ENCODE measurements at regions of chr16 and their contacts with region 1.

Region 1: GRCh38 chr16:29700253-29700987 is 21.4 kb downstream of the QPRT start:
- DNase-seq: peak; percentile 87
- H3K4me3 Mint-ChIP-seq: no peak overlapping the region
- H3K27ac Mint-ChIP-seq: no peak overlapping the region
- H3K4me1 Mint-ChIP-seq: no peaks in the 10 kb centered on the region
- H3K27me3 Mint-ChIP-seq: peaks cover 22% of the 10 kb centered on the region
- CTCF ChIP-seq: peak; percentile 95

Region 2: DNA sequence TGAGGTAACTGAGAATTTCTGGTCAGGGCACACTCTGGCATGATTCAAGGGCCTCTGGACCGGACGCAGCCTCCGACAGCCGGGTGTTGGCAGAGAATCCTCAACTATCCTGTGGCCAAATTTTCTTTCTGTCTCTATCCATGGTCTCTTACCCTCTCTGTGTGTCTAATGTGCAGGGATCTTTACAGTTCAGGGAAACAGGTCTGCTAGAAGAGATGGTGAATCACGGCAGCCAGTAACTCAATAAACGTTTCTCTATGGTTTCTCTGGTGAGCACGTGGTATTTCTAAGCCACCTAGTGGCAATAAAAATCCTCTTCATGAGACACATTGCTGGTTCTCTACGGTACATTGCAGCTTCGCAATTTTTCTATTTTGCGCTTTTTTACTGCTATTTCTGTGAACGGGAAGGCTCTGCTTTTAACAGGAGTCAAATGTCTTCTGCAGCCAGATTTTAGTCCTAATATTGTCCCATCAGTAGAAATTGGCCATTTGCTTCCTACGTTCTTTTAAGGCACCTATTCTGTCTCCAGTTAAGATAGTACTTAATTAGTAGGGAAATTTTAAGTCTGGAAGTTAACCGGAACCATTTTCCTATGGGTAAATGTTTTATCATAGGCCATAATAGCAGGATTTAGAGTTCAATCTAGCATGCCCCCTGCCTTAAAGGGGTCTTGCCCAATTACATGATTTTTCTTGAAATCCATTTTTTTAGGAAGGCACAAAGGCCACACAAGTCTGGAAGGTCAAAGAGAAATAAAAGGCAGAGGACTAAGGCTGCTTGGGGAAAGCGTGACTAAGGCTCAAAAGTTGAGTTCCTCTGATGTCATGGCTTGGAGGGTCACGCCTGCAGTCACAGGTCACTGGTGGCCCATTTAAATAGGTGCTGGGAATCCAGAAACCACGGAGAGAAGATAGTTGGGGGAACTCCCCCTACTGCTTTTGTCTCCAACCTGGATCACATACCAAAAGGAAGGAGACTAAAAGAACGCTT is 10.1 kb after region 1 on chr16:
- CTCF ChIA-PET with region 1: interaction called, 19 read pairs
- POLR2A ChIA-PET with region 1: interaction called, 5 read pairs
- intact Hi-C with region 1: no loop called
- DNase-seq: peak; percentile 77
- H3K4me3 Mint-ChIP-seq: no peak overlapping the region
- H3K27ac Mint-ChIP-seq: no peak overlapping the region
- H3K4me1 Mint-ChIP-seq: peaks cover 12% of the 10 kb centered on the region
- H3K27me3 Mint-ChIP-seq: no peaks in the 10 kb centered on the region
- CTCF ChIP-seq: peak; percentile 41

Region 3: GRCh38 chr16:29729116-29729521 is 28.7 kb after region 1 on chr16:
- CTCF ChIA-PET with region 1: interaction called, 15 read pairs
- POLR2A ChIA-PET with region 1: interaction called, 4 read pairs
- intact Hi-C with region 1: no loop called
- DNase-seq: peak; percentile 68
- H3K4me3 Mint-ChIP-seq: peak overlapping the region; percentile 28
- H3K27ac Mint-ChIP-seq: no peak overlapping the region
- H3K4me1 Mint-ChIP-seq: peaks cover 6% of the 10 kb centered on the region
- H3K27me3 Mint-ChIP-seq: peaks cover 33% of the 10 kb centered on the region
- CTCF ChIP-seq: peak; percentile 53

Region 4: GRCh38 chr16:29848420-29849297 is 148.2 kb after region 1 on chr16:
- CTCF ChIA-PET with region 1: interaction called, 8 read pairs
- POLR2A ChIA-PET with region 1: no interaction called
- intact Hi-C with region 1: loop called (anchors 1 kb)
- DNase-seq: peak; percentile 73
- H3K4me3 Mint-ChIP-seq: no peak overlapping the region
- H3K27ac Mint-ChIP-seq: no peak overlapping the region
- H3K4me1 Mint-ChIP-seq: no peaks in the 10 kb centered on the region
- H3K27me3 Mint-ChIP-seq: no peaks in the 10 kb centered on the region
- CTCF ChIP-seq: peak; percentile 90

Region 5: DNA sequence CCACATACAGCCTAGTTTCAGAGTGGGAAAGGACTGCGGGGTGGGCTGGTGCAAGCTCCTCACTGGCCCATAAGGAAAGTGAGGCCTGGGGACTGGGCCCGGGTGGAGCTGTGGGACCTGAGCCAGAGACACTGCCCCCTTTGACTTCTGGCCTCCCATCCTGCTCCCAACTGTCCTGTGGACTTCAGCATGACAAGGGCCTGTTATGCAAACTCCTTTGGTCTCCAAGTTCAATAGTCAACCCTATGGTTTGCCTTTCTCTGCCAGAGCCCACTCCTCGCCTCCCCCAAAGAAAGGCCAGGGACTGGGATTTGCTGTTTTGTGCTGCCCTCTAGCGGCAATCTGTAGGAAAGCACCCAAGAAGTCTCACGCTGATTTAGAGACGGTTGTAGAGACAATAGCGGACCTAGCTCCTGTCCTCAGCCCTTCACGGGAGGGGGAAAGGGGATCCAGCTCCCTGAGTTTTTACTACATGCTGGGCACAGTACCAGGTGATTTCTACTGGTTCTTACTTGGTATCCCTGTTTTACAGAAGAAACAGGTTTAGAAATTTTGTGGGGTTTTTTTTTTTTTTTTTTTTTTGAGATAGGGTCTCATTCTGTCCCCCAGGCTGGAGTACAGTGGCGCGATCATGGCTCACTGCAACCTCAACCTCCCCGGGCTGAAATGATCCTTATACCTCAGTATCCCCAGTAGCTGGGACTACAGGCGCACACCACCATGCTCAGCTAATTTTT is 331.8 kb after region 1 on chr16:
- CTCF ChIA-PET with region 1: interaction called, 25 read pairs
- POLR2A ChIA-PET with region 1: no interaction called
- intact Hi-C with region 1: no loop called
- DNase-seq: peak; percentile 72
- H3K4me3 Mint-ChIP-seq: no peak overlapping the region
- H3K27ac Mint-ChIP-seq: no peak overlapping the region
- H3K4me1 Mint-ChIP-seq: no peaks in the 10 kb centered on the region
- H3K27me3 Mint-ChIP-seq: peaks cover 34% of the 10 kb centered on the region
- CTCF ChIP-seq: peak; percentile 84

Measured in MCF 10A (cell line).